A673 (cell line): ENCODE measurements at regions of chr4 and their contacts with region 1.

Region 1: GRCh38 chr4:155268821-155269220 is 60.4 kb downstream of the NPY2R start:
- DNase-seq: no peak
- H3K4me3 ChIP-seq: no peak overlapping the region
- H3K27ac ChIP-seq: no peak overlapping the region
- H3K4me1 ChIP-seq: no peaks in the 10 kb centered on the region
- H3K27me3 ChIP-seq: no peaks in the 10 kb centered on the region
- CTCF ChIP-seq: no peak

Region 2: GRCh38 chr4:155288999-155289398 is 20.2 kb after region 1 on chr4:
- CTCF ChIA-PET with region 1: no interaction called
- POLR2A ChIA-PET with region 1: no interaction called
- intact Hi-C with region 1: no loop called
- DNase-seq: no peak
- H3K4me3 ChIP-seq: no peak overlapping the region
- H3K27ac ChIP-seq: no peak overlapping the region
- H3K4me1 ChIP-seq: no peaks in the 10 kb centered on the region
- H3K27me3 ChIP-seq: no peaks in the 10 kb centered on the region
- CTCF ChIP-seq: no peak

Region 3: DNA sequence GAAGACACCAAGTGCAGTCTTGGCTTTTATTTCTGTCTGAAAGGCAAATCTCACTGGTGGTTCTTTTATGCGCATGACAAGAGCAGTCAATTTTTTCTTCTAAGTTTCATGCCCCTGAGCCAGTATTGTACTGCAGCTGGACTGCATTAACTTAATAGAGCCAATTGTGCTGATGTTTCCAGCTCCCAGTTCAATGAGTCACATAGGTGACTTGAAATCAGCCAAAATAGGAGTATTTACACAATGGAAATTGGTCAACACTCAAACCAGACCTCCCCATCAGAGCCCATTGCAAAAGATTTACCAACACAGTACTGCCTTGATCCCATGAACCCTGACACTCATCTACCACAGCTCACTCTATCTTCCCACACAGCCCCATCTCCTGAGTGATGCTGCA is 297.5 kb after region 1 on chr4:
- CTCF ChIA-PET with region 1: no interaction called
- POLR2A ChIA-PET with region 1: no interaction called
- intact Hi-C with region 1: no loop called
- DNase-seq: no peak
- H3K4me3 ChIP-seq: no peak overlapping the region
- H3K27ac ChIP-seq: no peak overlapping the region
- H3K4me1 ChIP-seq: no peaks in the 10 kb centered on the region
- H3K27me3 ChIP-seq: no peaks in the 10 kb centered on the region
- CTCF ChIP-seq: no peak

Region 4: DNA sequence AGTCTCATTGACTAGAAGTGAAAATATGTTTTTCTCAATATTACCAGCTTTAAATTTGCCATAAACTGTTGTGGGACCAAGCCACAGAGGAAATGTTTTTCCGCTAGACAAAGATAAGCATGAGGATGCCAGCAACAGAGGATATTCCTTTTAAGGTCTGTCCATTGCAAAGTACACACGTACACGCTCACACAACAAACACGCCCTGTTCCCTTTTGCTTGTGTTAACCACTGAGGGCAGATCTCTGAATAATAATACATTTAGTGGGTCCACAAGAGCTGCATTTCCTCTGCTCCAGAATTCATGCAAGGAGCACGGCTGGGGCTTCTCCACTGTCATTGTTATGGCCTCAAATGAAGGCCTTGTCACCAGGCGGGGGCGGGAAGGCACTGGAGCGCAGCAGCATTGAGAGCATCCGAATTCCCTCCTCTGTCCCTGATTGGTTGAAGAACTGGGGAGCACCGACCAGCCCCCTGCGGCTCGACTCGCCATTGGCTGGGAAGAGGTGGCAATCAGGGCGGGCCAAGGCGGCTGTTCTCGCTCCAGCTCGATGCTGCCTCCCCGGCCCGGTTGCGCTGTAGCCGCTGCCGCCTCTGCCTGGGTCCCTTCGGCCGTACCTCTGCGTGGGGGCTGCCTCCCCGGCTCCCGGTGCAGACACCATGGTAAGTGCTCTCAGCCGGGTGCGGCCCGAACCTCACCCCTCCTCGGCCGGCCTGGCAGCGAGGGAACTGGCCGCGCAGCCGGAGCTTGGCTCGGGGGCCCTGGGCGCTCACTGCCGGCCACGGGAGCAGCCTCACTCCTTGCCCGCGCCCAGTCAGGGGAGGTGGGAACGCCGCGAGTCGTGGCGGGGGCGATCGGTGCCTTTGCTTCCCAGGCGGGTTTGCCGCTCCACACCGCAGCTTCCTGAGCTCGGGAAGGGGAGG is 489.9 kb after region 1 on chr4 and contains the start of gene GUCY1B1:
- CTCF ChIA-PET with region 1: no interaction called
- POLR2A ChIA-PET with region 1: no interaction called
- intact Hi-C with region 1: loop called (anchors 10 kb)
- DNase-seq: peak; percentile 65
- H3K4me3 ChIP-seq: peak within 1 kb of the TSS; percentile 39
- H3K27ac ChIP-seq: no peak within 1 kb of the TSS
- H3K4me1 ChIP-seq: no peaks in the 10 kb centered on the region
- H3K27me3 ChIP-seq: peaks cover 37% of the 10 kb centered on the region
- CTCF ChIP-seq: no peak
- total RNA-seq, gene GUCY1B1: not detected in 2 replicates